Left lung (tissue), 14 donors: ENCODE measurements at regions of chr1 and their contacts with region 1.

Region 1: GRCh38 chr1:211830330-211831142 is at the start of gene LPGAT1:
- DNase-seq: peak; percentile 73 to 99 (median 82)
- ATAC-seq: peak; percentile 99
- H3K4me3 ChIP-seq: peak within 1 kb of the TSS; percentile 64 to 66
- H3K27ac ChIP-seq: peak within 1 kb of the TSS; percentile 81 to 95
- H3K4me1 ChIP-seq: peaks cover 7 to 38% of the 10 kb centered on the region in 2 donors
- H3K27me3 ChIP-seq: no peaks in the 10 kb centered on the region
- CTCF ChIP-seq: peak; percentile 40 to 66
- polyA plus RNA-seq, gene LPGAT1: 17.1 to 26.2 (median 20.5) TPM

Region 2: GRCh38 chr1:211703812-211704537 is 126.6 kb before region 1 on chr1:
- intact Hi-C with region 1: loop called in 1 of 2 experiments (anchors 5 kb)
- DNase-seq: no peak
- ATAC-seq: no peak
- H3K4me3 ChIP-seq: no peak overlapping the region
- H3K27ac ChIP-seq: no peak overlapping the region
- H3K4me1 ChIP-seq: peaks cover 0 to 2% of the 10 kb centered on the region in 2 donors
- H3K27me3 ChIP-seq: peaks cover 0 to 8% of the 10 kb centered on the region in 2 donors
- CTCF ChIP-seq: no peak